Mammary epithelial cell (primary cell): ENCODE measurements at regions of chr13 and their contacts with region 1.

Region 1: GRCh38 chr13:52011632-52012511 is at the start of gene ALG11:
- DNase-seq: peak; percentile 97
- H3K4me3 ChIP-seq: peak within 1 kb of the TSS; percentile 98 to 99 (median 98)
- H3K27ac ChIP-seq: peak within 1 kb of the TSS; percentile 86
- H3K4me1 ChIP-seq: peaks cover 10% of the 10 kb centered on the region
- H3K27me3 ChIP-seq: no peaks in the 10 kb centered on the region
- CTCF ChIP-seq: no peak
- total RNA-seq, gene ALG11: 19.5 to 29.4 TPM

Region 2: DNA sequence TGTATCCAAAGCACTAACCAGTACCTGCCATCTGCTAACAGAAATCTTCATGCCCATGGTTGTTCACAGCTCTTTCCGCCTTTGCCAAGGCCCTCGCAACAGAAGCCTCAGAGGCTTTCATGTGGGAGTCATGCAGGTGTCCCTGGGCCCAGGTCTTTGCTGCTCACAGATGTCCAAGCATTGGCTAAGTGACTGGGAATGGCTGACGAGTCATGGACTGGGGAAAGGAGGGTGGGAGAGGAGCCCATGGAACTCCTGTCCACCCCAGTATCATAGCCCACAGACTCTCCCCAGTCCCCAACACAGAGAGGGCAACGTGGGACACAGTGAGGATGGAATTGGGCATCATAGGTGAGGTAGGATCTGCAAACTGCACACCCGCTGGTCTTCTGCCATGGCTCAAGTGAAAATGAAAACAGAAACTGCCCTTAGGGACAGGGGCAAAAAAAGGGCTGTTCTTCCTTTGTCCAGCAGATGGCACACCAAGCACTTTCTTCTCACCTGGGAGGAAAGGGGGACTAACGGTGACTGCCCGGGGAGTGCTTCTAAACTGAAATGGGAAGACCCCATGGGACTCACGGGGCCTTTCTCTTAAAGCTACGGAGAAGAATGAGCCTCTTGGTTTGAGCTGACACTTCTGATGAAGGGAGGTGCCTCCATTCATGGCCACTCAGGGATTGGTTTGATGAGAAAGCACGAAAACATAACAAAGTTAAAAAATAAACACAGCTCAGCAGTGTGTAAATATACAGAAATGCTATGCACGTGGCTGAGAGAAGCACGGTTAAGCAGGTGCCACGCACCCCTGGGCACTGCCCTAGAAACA is 196.8 kb before region 1 on chr13:
- CTCF ChIA-PET with region 1: no interaction called
- dilution Hi-C with region 1: no loop called
- in situ Hi-C with region 1: no loop called
- intact Hi-C with region 1: no loop called
- DNase-seq: peak; percentile 67
- H3K4me3 ChIP-seq: peak overlapping the region in 2 of 3 experiments; percentile 22 to 34
- H3K27ac ChIP-seq: no peak overlapping the region
- H3K4me1 ChIP-seq: peaks cover 4% of the 10 kb centered on the region
- H3K27me3 ChIP-seq: no peaks in the 10 kb centered on the region
- CTCF ChIP-seq: peak; percentile 85 to 86

Region 3: GRCh38 chr13:51935326-51936201 is 76.3 kb before region 1 on chr13:
- CTCF ChIA-PET with region 1: no interaction called
- dilution Hi-C with region 1: no loop called
- in situ Hi-C with region 1: no loop called
- intact Hi-C with region 1: loop called (anchors 5 kb)
- DNase-seq: peak; percentile 19
- H3K4me3 ChIP-seq: no peak overlapping the region
- H3K27ac ChIP-seq: no peak overlapping the region
- H3K4me1 ChIP-seq: no peaks in the 10 kb centered on the region
- H3K27me3 ChIP-seq: no peaks in the 10 kb centered on the region
- CTCF ChIP-seq: peak; percentile 37 to 62

Region 4: DNA sequence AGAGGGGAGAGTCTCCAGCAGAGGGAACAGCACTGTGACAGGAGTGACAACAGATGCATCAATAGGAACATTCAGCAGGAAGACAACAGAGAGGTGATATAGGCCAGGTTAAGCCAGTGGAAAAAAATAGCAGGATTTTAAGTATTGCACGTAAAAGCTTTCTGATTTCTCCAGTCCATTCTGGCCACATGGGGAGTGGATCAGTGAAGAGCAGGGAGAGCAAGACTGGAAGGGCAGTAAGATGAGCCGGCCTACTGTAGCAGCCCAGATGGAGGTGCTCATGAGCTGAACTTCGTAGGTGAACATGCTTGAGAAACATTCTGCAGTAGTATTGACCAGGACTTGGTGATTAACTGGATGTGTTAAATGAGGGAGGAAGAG is 14.4 kb after region 1 on chr13:
- CTCF ChIA-PET with region 1: no interaction called
- dilution Hi-C with region 1: no loop called
- in situ Hi-C with region 1: no loop called
- intact Hi-C with region 1: no loop called
- DNase-seq: no peak
- H3K4me3 ChIP-seq: no peak overlapping the region
- H3K27ac ChIP-seq: no peak overlapping the region
- H3K4me1 ChIP-seq: no peaks in the 10 kb centered on the region
- H3K27me3 ChIP-seq: no peaks in the 10 kb centered on the region
- CTCF ChIP-seq: no peak